ENCODE measurements at regions of chrX and their contacts with region 1.

Region 1: GRCh38 chrX:13520936-13521335 is 48.5 kb upstream of the EGFL6 start:
- DNase-seq: no peak
- ATAC-seq: no peak
- H3K4me3 ChIP-seq: no peak overlapping the region
- H3K4me3 Mint-ChIP-seq: no peak overlapping the region
- H3K27ac ChIP-seq: no peak overlapping the region
- H3K27ac Mint-ChIP-seq: no peak overlapping the region
- H3K4me1 ChIP-seq: no peaks in the 10 kb centered on the region
- H3K4me1 Mint-ChIP-seq: no peaks in the 10 kb centered on the region
- H3K27me3 ChIP-seq: no peaks in the 10 kb centered on the region
- H3K27me3 Mint-ChIP-seq: no peaks in the 10 kb centered on the region
- CTCF ChIP-seq: no peak

Region 2: GRCh38 chrX:13638826-13639225 is 117.9 kb after region 1 on chrX:
- CTCF ChIA-PET with region 1: no interaction called
- POLR2A ChIA-PET with region 1: no interaction called
- intact Hi-C with region 1: loop called in 1 of 2 experiments (anchors 5 kb)
- DNase-seq: no peak
- ATAC-seq: no peak
- H3K4me3 ChIP-seq: no peak overlapping the region
- H3K4me3 Mint-ChIP-seq: no peak overlapping the region
- H3K27ac ChIP-seq: no peak overlapping the region
- H3K27ac Mint-ChIP-seq: no peak overlapping the region
- H3K4me1 ChIP-seq: no peaks in the 10 kb centered on the region
- H3K4me1 Mint-ChIP-seq: no peaks in the 10 kb centered on the region
- H3K27me3 ChIP-seq: no peaks in the 10 kb centered on the region
- H3K27me3 Mint-ChIP-seq: peaks cover 4% of the 10 kb centered on the region
- CTCF ChIP-seq: no peak

Measured in CD4-positive, alpha-beta T cell (primary cell).